GM23248 (cell line): ENCODE measurements at regions of chr16 and their contacts with region 1.

Region 1: GRCh38 chr16:85821441-85822135 is 22.1 kb downstream of the COX4I1 start:
- DNase-seq: peak; percentile 89
- H3K4me3 ChIP-seq: no peak overlapping the region
- H3K27ac ChIP-seq: no peak overlapping the region
- H3K4me1 ChIP-seq: no peaks in the 10 kb centered on the region
- H3K27me3 ChIP-seq: peaks cover 38% of the 10 kb centered on the region

Region 2: GRCh38 chr16:85869785-85870558 is 48.4 kb after region 1 on chr16:
- in situ Hi-C with region 1: no loop called
- DNase-seq: no peak
- H3K4me3 ChIP-seq: no peak overlapping the region
- H3K27ac ChIP-seq: no peak overlapping the region
- H3K4me1 ChIP-seq: no peaks in the 10 kb centered on the region
- H3K27me3 ChIP-seq: peaks cover 74% of the 10 kb centered on the region

Region 3: GRCh38 chr16:85986931-85987749 is 165.6 kb after region 1 on chr16:
- in situ Hi-C with region 1: loop called (anchors 10 kb)
- DNase-seq: no peak
- H3K4me3 ChIP-seq: 0 out of 2 replicates have a peak overlapping the region, but pooled peaks have one; percentile 43
- H3K27ac ChIP-seq: no peak overlapping the region
- H3K4me1 ChIP-seq: no peaks in the 10 kb centered on the region
- H3K27me3 ChIP-seq: peaks cover 95% of the 10 kb centered on the region

Region 4: GRCh38 chr16:86016201-86016871 is 194.7 kb after region 1 on chr16:
- in situ Hi-C with region 1: loop called (anchors 10 kb)
- DNase-seq: peak; percentile 70
- H3K4me3 ChIP-seq: no peak overlapping the region
- H3K27ac ChIP-seq: no peak overlapping the region
- H3K4me1 ChIP-seq: no peaks in the 10 kb centered on the region
- H3K27me3 ChIP-seq: peaks cover 49% of the 10 kb centered on the region

Region 5: GRCh38 chr16:86048882-86049585 is 227.4 kb after region 1 on chr16:
- in situ Hi-C with region 1: no loop called
- DNase-seq: no peak
- H3K4me3 ChIP-seq: no peak overlapping the region
- H3K27ac ChIP-seq: no peak overlapping the region
- H3K4me1 ChIP-seq: no peaks in the 10 kb centered on the region
- H3K27me3 ChIP-seq: peaks cover 35% of the 10 kb centered on the region